Common myeloid progenitor, CD34-positive (primary cell): ENCODE measurements at regions of chr9 and their contacts with region 1.

Region 1: DNA sequence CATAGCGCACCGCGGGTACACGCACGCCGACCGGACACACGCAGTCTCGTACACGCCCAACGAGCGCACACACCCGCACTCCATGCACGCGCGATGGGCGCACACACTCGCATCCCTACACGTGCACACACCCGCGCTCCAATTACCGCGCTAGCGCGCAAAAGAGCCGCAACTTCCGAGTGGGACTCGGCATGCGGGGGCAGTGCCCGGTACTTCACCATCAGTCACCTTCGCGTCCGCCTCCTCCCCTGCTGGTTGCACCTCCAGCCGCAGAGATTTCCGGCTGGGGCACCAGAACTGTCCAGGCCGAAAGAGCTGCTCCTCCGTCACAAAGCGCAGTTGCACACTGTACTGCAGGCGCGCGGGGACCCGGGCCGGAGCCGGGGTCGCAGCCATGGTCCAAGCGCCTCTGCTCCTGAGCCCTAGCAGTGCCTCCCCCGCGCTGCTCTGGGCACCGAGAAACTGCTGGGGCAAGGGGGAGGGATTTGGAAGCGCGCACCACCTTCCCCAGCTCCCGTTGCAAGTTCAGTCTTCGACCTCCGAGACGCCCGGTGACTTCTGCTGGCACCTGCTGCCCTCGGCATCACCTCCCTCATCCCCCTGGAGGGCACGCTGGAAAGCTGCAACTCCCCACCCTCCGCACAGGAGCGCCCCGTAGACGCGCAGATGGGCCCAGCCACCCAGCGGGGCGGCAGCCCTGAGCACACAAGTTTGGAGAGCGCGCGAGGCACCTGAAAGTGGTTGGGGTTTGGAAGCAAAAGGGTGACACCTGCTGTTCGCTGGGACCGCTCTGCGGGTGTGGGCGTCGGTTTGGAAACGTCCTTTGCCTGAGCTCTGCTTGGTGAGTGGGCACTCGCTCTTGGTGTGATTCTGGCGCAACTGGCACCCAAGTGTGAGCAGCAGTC is 337.4 kb upstream of the PUM3 start:
- DNase-seq: peak; percentile 83 to 91 (median 90)
- H3K4me3 ChIP-seq: peak overlapping the region; percentile 34 to 81 (median 65)
- H3K27ac ChIP-seq: no peak overlapping the region
- H3K4me1 ChIP-seq: peaks cover under 1 to 32% (median 22%) of the 10 kb centered on the region in 4 experiments
- H3K27me3 ChIP-seq: peaks cover 0 to 24% (median 13%) of the 10 kb centered on the region in 5 experiments

Region 2: DNA sequence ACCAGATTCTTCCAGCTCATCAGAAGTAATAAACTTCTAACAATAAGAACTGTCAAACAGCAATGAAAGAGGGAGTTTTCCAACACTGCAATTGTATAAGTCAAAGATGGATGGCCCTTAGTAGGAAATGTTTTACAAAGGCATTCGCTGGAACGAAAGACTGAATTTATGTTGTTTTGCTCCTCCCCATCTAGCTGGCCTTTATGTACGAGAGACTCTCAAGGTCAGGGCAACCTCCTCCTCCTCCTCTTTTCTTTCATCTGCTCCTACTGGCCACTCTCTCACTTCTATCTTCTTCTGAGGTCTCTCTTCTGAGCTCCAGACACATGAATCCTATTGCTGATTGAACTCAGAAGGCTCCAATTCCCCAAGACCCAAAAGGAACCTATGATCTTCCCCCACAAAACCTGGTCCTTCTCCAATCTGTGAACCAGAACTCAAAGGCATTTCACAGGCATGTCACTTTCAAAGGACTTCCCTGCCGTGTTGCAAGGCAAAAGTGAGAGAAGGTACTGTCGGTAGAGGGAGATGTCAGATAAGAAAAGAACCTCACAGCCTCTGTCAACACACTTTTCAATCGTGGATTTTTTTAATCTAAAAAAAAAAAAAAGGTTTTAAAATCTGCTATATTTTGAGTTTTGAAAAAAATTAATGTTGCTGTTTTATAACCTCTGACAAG is 308.9 kb before region 1 on chr9:
- CTCF ChIA-PET with region 1: interaction called, 100 read pairs
- POLR2A ChIA-PET with region 1: no interaction called
- DNase-seq: peak; percentile 54 to 78 (median 75)
- H3K4me3 ChIP-seq: no peak overlapping the region
- H3K27ac ChIP-seq: no peak overlapping the region
- H3K4me1 ChIP-seq: no peaks in the 10 kb centered on the region
- H3K27me3 ChIP-seq: peaks cover 0 to 5% (median 0%) of the 10 kb centered on the region in 5 experiments

Region 3: GRCh38 chr9:3059781-3060468 is 121.4 kb before region 1 on chr9:
- CTCF ChIA-PET with region 1: no interaction called
- POLR2A ChIA-PET with region 1: no interaction called
- DNase-seq: no peak
- H3K4me3 ChIP-seq: no peak overlapping the region
- H3K27ac ChIP-seq: no peak overlapping the region
- H3K4me1 ChIP-seq: no peaks in the 10 kb centered on the region
- H3K27me3 ChIP-seq: no peaks in the 10 kb centered on the region

Region 4: GRCh38 chr9:3125597-3126405 is 55.5 kb before region 1 on chr9:
- CTCF ChIA-PET with region 1: no interaction called
- POLR2A ChIA-PET with region 1: no interaction called
- DNase-seq: peak in 1 of 3 donors; percentile 4
- H3K4me3 ChIP-seq: no peak overlapping the region
- H3K27ac ChIP-seq: no peak overlapping the region
- H3K4me1 ChIP-seq: peaks cover 0 to 3% (median 0%) of the 10 kb centered on the region in 4 experiments
- H3K27me3 ChIP-seq: no peaks in the 10 kb centered on the region